PC-9 (cell line): ENCODE measurements at regions of chrX and their contacts with region 1.

Region 1: DNA sequence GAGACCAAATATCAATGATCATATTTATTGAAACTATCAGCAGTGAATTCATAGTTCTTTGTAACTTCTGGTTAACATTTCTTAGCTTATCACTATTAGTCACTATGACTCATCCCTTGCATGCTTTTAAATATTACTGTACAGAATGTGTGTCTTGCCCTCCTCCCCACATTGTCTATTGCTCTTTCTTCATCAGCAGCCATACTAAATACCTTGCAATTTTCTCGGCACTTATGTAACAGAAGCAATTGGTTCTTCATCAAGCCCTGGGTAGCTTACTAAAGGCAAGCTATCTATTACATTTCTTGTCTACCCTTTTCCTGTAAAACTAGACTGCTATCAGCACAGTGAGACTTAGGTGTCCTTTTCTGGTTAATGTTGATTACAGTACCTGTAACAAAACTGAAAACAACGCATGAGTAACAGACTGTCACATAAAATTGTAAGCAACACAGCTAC is 8.2 kb downstream of the KLHL4 start:
- DNase-seq: peak; percentile 12 to 38
- H3K4me3 ChIP-seq: no peak overlapping the region
- H3K27ac ChIP-seq: peak overlapping the region; percentile 29; the same call in 1 of the 2 replicates
- H3K4me1 ChIP-seq: no peaks in the 10 kb centered on the region
- H3K27me3 ChIP-seq: no peaks in the 10 kb centered on the region
- CTCF ChIP-seq: no peak

Region 2: GRCh38 chrX:87397103-87397886 is 128.5 kb before region 1 on chrX:
- CTCF ChIA-PET with region 1: no interaction called
- POLR2A ChIA-PET with region 1: interaction called, 19 read pairs
- intact Hi-C with region 1: no loop called
- DNase-seq: no peak
- H3K4me3 ChIP-seq: no peak overlapping the region
- H3K27ac ChIP-seq: no peak overlapping the region
- H3K4me1 ChIP-seq: no peaks in the 10 kb centered on the region
- H3K27me3 ChIP-seq: no peaks in the 10 kb centered on the region
- CTCF ChIP-seq: no peak

Region 3: GRCh38 chrX:87409113-87409841 is 116.5 kb before region 1 on chrX:
- CTCF ChIA-PET with region 1: no interaction called
- POLR2A ChIA-PET with region 1: no interaction called
- intact Hi-C with region 1: loop called (anchors 2 kb)
- DNase-seq: peak; percentile 45 to 71
- H3K4me3 ChIP-seq: no peak overlapping the region
- H3K27ac ChIP-seq: no peak overlapping the region
- H3K4me1 ChIP-seq: no peaks in the 10 kb centered on the region
- H3K27me3 ChIP-seq: no peaks in the 10 kb centered on the region
- CTCF ChIP-seq: no peak

Region 4: GRCh38 chrX:87468941-87469340 is 56.9 kb before region 1 on chrX:
- CTCF ChIA-PET with region 1: no interaction called
- POLR2A ChIA-PET with region 1: no interaction called
- intact Hi-C with region 1: no loop called
- DNase-seq: no peak
- H3K4me3 ChIP-seq: no peak overlapping the region
- H3K27ac ChIP-seq: no peak overlapping the region
- H3K4me1 ChIP-seq: no peaks in the 10 kb centered on the region
- H3K27me3 ChIP-seq: no peaks in the 10 kb centered on the region
- CTCF ChIP-seq: no peak